ENCODE measurements at regions of chr9 and their contacts with region 1.

Region 1: GRCh38 chr9:97710356-97711222 is 13.4 kb upstream of the XPA start:
- DNase-seq: peak; percentile 59
- H3K4me3 ChIP-seq: no peak overlapping the region
- H3K27ac ChIP-seq: no peak overlapping the region
- H3K4me1 ChIP-seq: peaks cover 24% of the 10 kb centered on the region
- H3K27me3 ChIP-seq: peaks cover 10% of the 10 kb centered on the region
- CTCF ChIP-seq: peak; percentile 74 to 79

Region 2: DNA sequence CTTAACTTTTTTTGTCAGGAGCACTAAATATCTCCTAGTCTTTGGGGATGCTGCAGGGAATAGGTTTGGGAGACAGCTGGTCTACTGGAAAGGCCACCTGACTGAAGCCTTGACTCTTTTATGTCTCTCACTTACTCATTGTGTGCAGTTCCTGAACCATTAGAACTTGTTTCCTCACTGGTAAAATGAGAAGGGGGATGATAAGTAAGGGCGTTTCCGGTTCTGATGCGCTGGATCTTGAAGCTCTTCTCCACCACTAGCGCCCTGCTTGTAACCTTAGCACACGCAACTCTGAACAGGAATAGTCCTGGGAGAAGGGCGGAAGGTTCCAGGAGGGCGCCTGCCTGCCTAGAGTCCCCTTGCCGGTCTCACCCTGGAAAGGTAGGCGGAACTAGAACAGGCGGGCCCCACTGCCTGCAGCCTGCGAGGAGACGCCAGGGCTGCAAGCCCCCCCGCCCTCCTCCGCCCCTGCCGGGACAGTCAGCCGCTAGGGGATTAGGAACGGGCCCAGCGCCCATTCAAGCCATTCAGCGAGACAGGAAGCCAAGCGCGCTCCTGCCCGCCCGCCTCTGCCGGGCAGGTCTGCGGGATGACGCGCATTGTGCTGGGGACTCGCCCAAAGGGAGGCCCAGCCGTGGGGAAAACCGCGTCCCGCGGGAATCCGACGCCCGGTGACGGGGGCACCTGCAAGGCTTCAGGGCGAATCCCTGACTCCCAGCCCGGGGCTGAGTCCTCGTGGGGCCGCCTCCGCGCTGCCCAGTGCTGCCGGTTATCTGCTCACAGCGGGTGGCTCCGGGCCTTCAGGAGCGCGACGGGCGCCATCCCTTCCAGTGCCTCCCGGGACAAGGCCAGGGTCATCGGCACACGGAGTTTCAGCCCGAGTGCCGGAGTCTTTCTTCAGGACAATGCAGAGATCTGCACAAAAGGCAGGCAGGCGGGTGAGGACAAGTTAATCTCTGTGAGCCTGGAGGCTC is 30.5 kb after region 1 on chr9:
- CTCF ChIA-PET with region 1: no interaction called
- dilution Hi-C with region 1: no loop called
- in situ Hi-C with region 1: no loop called
- intact Hi-C with region 1: no loop called
- DNase-seq: peak; percentile 66
- H3K4me3 ChIP-seq: peak overlapping the region in 1 of 3 experiments; percentile 35
- H3K27ac ChIP-seq: no peak overlapping the region
- H3K4me1 ChIP-seq: peaks cover 11% of the 10 kb centered on the region
- H3K27me3 ChIP-seq: peaks cover 4% of the 10 kb centered on the region
- CTCF ChIP-seq: peak in 1 of 2 donors; percentile 23

Region 3: GRCh38 chr9:97803167-97804058 is 92.8 kb after region 1 on chr9:
- CTCF ChIA-PET with region 1: no interaction called
- dilution Hi-C with region 1: no loop called
- in situ Hi-C with region 1: no loop called
- intact Hi-C with region 1: loop called (anchors 1 kb)
- DNase-seq: peak; percentile 67
- H3K4me3 ChIP-seq: peak overlapping the region; percentile 35 to 57 (median 52)
- H3K27ac ChIP-seq: peak overlapping the region; percentile 27
- H3K4me1 ChIP-seq: peaks cover 49% of the 10 kb centered on the region
- H3K27me3 ChIP-seq: no peaks in the 10 kb centered on the region
- CTCF ChIP-seq: no peak

Region 4: DNA sequence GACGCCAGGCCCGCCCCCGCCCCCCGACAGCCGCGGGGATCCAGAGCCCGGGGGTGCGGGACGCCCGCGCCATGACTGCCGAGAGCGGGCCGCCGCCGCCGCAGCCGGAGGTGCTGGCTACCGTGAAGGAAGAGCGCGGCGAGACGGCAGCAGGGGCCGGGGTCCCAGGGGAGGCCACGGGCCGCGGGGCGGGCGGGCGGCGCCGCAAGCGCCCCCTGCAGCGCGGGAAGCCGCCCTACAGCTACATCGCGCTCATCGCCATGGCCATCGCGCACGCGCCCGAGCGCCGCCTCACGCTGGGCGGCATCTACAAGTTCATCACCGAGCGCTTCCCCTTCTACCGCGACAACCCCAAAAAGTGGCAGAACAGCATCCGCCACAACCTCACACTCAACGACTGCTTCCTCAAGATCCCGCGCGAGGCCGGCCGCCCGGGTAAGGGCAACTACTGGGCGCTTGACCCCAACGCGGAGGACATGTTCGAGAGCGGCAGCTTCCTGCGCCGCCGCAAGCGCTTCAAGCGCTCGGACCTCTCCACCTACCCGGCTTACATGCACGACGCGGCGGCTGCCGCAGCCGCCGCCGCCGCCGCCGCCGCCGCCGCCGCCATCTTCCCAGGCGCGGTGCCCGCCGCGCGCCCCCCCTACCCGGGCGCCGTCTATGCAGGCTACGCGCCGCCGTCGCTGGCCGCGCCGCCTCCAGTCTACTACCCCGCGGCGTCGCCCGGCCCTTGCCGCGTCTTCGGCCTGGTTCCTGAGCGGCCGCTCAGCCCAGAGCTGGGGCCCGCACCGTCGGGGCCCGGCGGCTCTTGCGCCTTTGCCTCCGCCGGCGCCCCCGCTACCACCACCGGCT is 143.5 kb after region 1 on chr9:
- CTCF ChIA-PET with region 1: no interaction called
- dilution Hi-C with region 1: no loop called
- in situ Hi-C with region 1: no loop called
- intact Hi-C with region 1: loop called (anchors 1 kb)
- DNase-seq: peak; percentile 57
- H3K4me3 ChIP-seq: peak overlapping the region in 2 of 3 experiments; percentile 36 to 44
- H3K27ac ChIP-seq: no peak overlapping the region
- H3K4me1 ChIP-seq: peaks cover 9% of the 10 kb centered on the region
- H3K27me3 ChIP-seq: peaks cover 68% of the 10 kb centered on the region
- CTCF ChIP-seq: peak in 1 of 2 donors; percentile 13

Region 5: GRCh38 chr9:97900738-97901565 is 190.4 kb after region 1 on chr9:
- CTCF ChIA-PET with region 1: no interaction called
- dilution Hi-C with region 1: no loop called
- in situ Hi-C with region 1: loop called (anchors 5 kb)
- intact Hi-C with region 1: loop called (anchors 1 kb)
- DNase-seq: peak; percentile 36
- H3K4me3 ChIP-seq: no peak overlapping the region
- H3K27ac ChIP-seq: no peak overlapping the region
- H3K4me1 ChIP-seq: peaks cover 6% of the 10 kb centered on the region
- H3K27me3 ChIP-seq: no peaks in the 10 kb centered on the region
- CTCF ChIP-seq: peak; percentile 79 to 80

Region 6: GRCh38 chr9:97938081-97938644 is 227.6 kb after region 1 on chr9 and contains the start of gene HEMGN:
- CTCF ChIA-PET with region 1: no interaction called
- dilution Hi-C with region 1: no loop called
- in situ Hi-C with region 1: no loop called
- intact Hi-C with region 1: no loop called
- DNase-seq: no peak
- H3K4me3 ChIP-seq: no peak within 1 kb of the TSS
- H3K27ac ChIP-seq: no peak within 1 kb of the TSS
- H3K4me1 ChIP-seq: no peaks in the 10 kb centered on the region
- H3K27me3 ChIP-seq: peaks cover 26% of the 10 kb centered on the region
- CTCF ChIP-seq: no peak
- total RNA-seq, gene HEMGN: not detected

Region 7: GRCh38 chr9:98255578-98256296 is 545.1 kb after region 1 on chr9 and contains the start of gene TBC1D2:
- CTCF ChIA-PET with region 1: no interaction called
- dilution Hi-C with region 1: no loop called
- in situ Hi-C with region 1: no loop called
- intact Hi-C with region 1: loop called (anchors 10 kb)
- DNase-seq: peak; percentile 94
- H3K4me3 ChIP-seq: peak within 1 kb of the TSS; percentile 69 to 97 (median 93)
- H3K27ac ChIP-seq: peak within 1 kb of the TSS; percentile 72
- H3K4me1 ChIP-seq: peaks cover 39% of the 10 kb centered on the region
- H3K27me3 ChIP-seq: no peaks in the 10 kb centered on the region
- CTCF ChIP-seq: peak in 1 of 2 donors; percentile 35
- total RNA-seq, gene TBC1D2: 86.7 to 98.2 TPM

Measured in mammary epithelial cell (primary cell).